Lower leg skin (tissue), 4 donors: ENCODE measurements at regions of chr3 and their contacts with region 1.

Region 1: DNA sequence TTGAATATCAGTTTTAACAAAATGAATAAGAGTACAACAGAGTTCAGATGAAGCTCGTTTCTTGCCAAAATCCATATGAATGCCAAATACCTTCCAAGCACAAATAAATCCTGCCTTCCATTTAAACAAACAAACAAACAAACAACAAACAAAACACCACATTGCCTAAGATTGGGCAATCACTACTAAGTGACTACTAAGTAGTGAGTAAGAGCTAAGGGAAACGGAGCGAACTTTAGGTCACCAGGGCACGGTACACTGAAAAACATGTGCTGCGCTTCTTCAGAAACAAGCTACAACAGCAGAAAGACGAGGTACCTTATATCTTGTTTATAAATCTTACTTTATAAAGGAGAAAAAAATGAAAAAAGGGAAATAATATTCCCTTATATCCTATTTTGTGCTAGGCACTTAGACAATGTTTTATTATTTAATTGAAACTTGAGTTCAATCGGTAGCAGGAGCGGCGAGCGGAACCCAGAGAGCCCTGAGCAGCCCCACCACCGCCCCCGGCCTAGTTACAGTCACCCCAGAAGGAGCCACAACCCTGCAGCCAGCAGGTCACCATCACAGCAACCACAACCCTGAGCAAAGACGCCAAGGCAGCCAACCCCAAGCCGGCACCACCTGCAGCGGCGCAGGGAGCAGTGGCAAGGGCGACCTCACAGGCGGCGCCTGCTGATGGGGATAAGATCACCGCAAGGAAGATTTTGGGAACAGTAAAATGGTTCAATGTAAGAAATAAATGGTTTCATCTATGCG is 216.9 kb downstream of the ZBTB20 start:
- DNase-seq: no peak
- H3K4me3 ChIP-seq: no peak overlapping the region
- CTCF ChIP-seq: no peak
- POLR2A ChIP-seq: no peak

Region 2: DNA sequence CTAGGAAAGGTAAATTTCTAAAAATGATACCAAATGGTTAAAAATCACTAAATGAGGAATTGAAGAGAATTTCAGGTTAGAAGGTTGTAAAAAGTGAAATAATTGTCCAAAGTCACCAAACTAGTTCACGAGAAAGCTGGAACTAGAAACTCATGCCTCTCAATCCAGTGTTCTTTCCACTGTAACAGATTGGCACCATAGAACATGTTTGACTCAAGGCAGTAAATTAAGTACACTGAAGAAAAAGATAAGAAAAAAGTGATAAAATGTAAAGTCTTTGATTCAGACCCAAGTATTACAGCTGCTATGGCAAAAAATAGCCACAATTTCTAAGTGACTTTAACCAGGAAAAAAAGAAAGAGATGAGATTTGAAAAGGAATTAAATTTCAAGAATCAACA is 190.4 kb after region 1 on chr3:
- intact Hi-C with region 1: loop called (anchors 5 kb)
- DNase-seq: no peak
- H3K4me3 ChIP-seq: no peak overlapping the region
- CTCF ChIP-seq: no peak
- POLR2A ChIP-seq: no peak